ENCODE measurements at regions of chr5 and their contacts with region 1.

Region 1: DNA sequence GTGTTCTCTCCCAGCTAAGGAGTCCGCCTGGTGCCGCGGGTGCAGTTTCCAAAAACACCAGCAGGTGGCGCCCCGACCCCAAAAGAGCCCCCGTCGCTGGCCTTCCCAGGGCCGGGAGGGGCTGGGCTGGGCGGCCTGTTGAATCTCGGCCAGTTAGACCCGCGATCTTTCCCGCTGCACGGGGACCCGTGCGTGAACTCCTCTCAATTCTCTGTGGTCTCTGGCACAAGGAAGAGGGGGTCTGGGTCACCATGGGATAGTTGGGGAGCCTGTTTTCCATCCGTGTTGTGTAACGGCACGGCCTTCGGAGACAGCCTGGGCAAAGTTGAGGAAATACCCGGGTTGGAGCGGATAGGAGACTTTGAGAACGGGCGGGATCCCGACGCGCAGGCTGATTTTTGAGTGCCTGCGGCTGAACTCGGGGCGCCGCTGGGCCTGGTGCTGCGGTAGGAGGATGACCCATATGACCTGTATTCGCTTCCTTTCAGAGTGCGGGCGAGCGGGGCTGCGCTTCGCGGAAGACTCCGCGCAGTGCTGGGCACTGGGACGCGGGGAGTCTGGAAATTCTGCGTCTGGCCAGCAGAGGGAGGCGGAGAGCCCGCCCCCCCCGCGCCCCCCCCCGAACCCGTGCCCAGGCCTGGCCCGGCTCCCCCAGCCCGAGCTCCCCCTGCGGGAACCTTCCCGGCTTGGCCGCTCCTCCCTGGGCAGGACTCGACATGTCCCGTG is 7.9 kb upstream of the PSD2 start:
- H3K4me3 Mint-ChIP-seq: peak overlapping the region; percentile 76
- H3K27ac Mint-ChIP-seq: no peak overlapping the region
- H3K4me1 Mint-ChIP-seq: no peaks in the 10 kb centered on the region
- H3K27me3 Mint-ChIP-seq: peaks cover 74% of the 10 kb centered on the region

Region 2: GRCh38 chr5:139844472-139845145 is 56.9 kb after region 1 on chr5:
- intact Hi-C with region 1: loop called (anchors 1 kb)
- H3K4me3 Mint-ChIP-seq: no peak overlapping the region
- H3K27ac Mint-ChIP-seq: no peak overlapping the region
- H3K4me1 Mint-ChIP-seq: peaks cover 5% of the 10 kb centered on the region
- H3K27me3 Mint-ChIP-seq: peaks cover 53% of the 10 kb centered on the region

Region 3: GRCh38 chr5:139863855-139864558 is 76.3 kb after region 1 on chr5:
- intact Hi-C with region 1: loop called (anchors 1 kb)
- H3K4me3 Mint-ChIP-seq: no peak overlapping the region
- H3K27ac Mint-ChIP-seq: no peak overlapping the region
- H3K4me1 Mint-ChIP-seq: no peaks in the 10 kb centered on the region
- H3K27me3 Mint-ChIP-seq: peaks cover 20% of the 10 kb centered on the region

Region 4: GRCh38 chr5:139968547-139969261 is 181.0 kb after region 1 on chr5:
- intact Hi-C with region 1: loop called (anchors 1 kb)
- H3K4me3 Mint-ChIP-seq: no peak overlapping the region
- H3K27ac Mint-ChIP-seq: no peak overlapping the region
- H3K4me1 Mint-ChIP-seq: peaks cover 5% of the 10 kb centered on the region
- H3K27me3 Mint-ChIP-seq: peaks cover 41% of the 10 kb centered on the region

Region 5: DNA sequence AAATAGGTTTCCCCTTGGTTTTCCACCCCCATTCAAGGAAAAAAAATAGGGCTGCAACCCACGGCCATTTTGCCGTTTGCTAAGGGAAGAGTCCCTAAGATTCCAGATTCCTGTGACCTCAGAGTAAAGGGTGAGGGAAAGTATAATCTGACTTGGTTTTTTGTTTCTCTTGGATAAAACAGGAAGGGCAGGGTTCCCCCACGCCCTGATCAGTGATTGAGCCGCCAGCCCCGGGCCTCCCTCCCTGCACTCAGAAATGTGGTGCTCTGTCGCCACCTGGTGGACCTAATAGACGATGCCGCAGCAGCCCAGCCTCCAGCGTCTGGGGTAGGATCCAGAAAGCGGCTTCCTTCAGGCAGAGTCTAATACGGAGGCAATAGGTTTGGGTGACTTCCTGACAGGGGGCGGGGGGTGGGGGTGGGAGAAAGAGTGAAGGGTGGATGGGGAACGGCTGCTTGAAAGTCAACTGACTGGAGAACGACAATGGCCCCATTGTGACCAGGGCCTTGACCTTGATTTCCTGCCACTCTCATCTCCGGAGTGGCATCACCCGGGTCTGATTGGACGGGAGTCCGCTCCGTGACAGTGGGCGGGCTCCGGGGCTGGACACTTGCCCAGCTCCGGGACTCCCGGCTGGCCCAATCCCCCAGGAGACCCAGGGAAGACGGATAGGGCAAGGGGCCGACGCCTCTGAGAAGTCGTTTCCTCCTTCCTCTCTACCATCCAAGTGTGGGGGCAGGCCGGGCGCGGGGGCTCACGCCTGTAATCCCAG is 369.5 kb after region 1 on chr5:
- intact Hi-C with region 1: loop called (anchors 5 kb)
- H3K4me3 Mint-ChIP-seq: no peak overlapping the region
- H3K27ac Mint-ChIP-seq: no peak overlapping the region
- H3K4me1 Mint-ChIP-seq: peaks cover 20% of the 10 kb centered on the region
- H3K27me3 Mint-ChIP-seq: peaks cover 15% of the 10 kb centered on the region